ENCODE measurements at regions of chr5 and their contacts with region 1.

Region 1: DNA sequence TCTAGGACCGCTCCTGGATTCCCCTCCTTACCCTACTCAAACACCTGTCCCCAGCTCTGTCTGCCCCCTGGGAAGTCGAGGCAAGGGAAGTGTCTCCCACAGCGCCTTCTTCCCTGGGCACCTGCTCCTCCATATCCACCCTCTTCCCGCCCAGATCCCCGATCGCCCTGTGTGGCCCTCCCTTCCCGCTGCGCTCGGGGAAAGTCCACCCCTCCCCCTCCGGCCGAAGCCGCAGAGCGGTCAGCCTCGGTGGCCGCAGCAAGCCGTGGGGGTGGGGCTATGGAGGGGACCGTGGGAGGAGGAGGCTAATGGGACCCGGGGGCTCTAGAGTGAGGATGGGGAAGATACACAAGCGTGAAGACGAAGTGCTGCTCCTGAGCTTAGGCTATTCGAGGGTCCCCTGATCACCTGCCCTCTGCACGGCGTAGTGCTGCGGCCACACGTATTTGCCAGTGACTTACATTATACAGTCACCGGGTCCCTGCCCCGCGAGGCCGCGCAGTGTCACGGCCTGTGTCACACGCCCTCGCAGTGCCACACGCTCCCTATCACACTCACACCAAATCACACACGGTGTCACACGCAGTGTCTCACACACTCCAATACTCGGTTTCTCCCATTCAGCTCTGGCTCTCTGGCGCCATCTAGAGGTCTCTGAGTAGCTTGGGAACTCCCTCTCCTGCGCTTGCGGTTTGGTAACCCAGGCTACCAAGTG is 658 bp upstream of the PCDH1 start:
- DNase-seq: peak; percentile 93
- H3K4me3 Mint-ChIP-seq: peak overlapping the region; percentile 37
- H3K27ac Mint-ChIP-seq: no peak overlapping the region
- H3K4me1 Mint-ChIP-seq: peaks cover 21% of the 10 kb centered on the region
- H3K27me3 Mint-ChIP-seq: peaks cover 78% of the 10 kb centered on the region

Region 2: GRCh38 chr5:141691867-141692532 is 186.9 kb before region 1 on chr5:
- CTCF ChIA-PET with region 1: interaction called, 60 read pairs
- POLR2A ChIA-PET with region 1: no interaction called
- DNase-seq: peak; percentile 85
- H3K4me3 Mint-ChIP-seq: peak overlapping the region; percentile 55
- H3K27ac Mint-ChIP-seq: peak overlapping the region; percentile 54
- H3K4me1 Mint-ChIP-seq: peaks cover 31% of the 10 kb centered on the region
- H3K27me3 Mint-ChIP-seq: peaks cover 28% of the 10 kb centered on the region

Region 3: GRCh38 chr5:141701360-141702119 is 177.3 kb before region 1 on chr5:
- CTCF ChIA-PET with region 1: interaction called, 15 read pairs
- POLR2A ChIA-PET with region 1: no interaction called
- DNase-seq: no peak
- H3K4me3 Mint-ChIP-seq: peak overlapping the region; percentile 71
- H3K27ac Mint-ChIP-seq: no peak overlapping the region
- H3K4me1 Mint-ChIP-seq: peaks cover 23% of the 10 kb centered on the region
- H3K27me3 Mint-ChIP-seq: peaks cover 48% of the 10 kb centered on the region

Region 4: DNA sequence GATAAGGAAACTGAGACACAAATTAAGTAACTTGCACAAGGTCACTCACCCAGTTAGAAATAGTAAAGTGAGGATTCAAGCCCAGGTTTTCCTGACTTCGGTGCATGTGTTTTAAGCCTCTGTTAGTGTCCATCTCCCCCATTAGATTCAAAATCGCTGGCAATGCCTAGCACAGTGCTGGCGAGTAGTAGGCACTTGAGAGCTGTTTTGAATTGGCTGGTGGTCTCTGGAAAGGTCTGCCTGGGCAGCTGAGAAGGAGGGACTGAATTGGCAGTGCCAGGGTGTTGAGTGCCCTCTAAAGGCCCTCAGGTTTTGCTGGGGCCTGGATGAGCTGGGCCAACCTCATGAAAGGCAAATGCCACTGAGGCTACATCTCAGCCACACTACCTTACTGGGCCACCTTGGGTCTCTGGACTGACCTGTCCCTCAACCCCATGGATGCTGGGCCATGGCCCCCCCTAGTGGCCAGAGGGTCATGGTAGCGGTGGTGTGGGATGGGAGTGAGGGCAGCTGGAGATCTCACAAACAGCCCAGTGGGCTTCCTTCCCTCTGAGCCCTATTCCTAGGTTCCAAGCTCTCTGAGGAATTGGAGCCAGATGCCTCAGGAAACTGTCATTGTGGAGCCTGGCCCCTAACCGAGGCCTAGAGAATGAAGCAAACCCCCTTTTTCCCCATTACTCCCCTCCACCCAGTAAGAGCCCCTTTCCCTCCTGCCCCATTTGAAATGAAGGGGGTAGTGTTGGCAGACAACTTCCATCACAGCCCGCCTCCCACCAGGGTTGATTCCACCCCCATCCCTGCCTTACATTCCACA is 64.9 kb before region 1 on chr5:
- CTCF ChIA-PET with region 1: interaction called, 10 read pairs
- POLR2A ChIA-PET with region 1: no interaction called
- DNase-seq: peak; percentile 26
- H3K4me3 Mint-ChIP-seq: no peak overlapping the region
- H3K27ac Mint-ChIP-seq: no peak overlapping the region
- H3K4me1 Mint-ChIP-seq: no peaks in the 10 kb centered on the region
- H3K27me3 Mint-ChIP-seq: peaks cover 30% of the 10 kb centered on the region

Region 5: GRCh38 chr5:141851516-141851871 is 27.4 kb before region 1 on chr5:
- CTCF ChIA-PET with region 1: no interaction called
- POLR2A ChIA-PET with region 1: no interaction called
- DNase-seq: no peak
- H3K4me3 Mint-ChIP-seq: peak overlapping the region; percentile 44
- H3K27ac Mint-ChIP-seq: no peak overlapping the region
- H3K4me1 Mint-ChIP-seq: peaks cover 13% of the 10 kb centered on the region
- H3K27me3 Mint-ChIP-seq: peaks cover 2% of the 10 kb centered on the region

Region 6: GRCh38 chr5:141889282-141889871 is 10.5 kb after region 1 on chr5:
- CTCF ChIA-PET with region 1: interaction called, 11 read pairs
- POLR2A ChIA-PET with region 1: no interaction called
- DNase-seq: no peak
- H3K4me3 Mint-ChIP-seq: no peak overlapping the region
- H3K27ac Mint-ChIP-seq: no peak overlapping the region
- H3K4me1 Mint-ChIP-seq: no peaks in the 10 kb centered on the region
- H3K27me3 Mint-ChIP-seq: peaks cover 25% of the 10 kb centered on the region

Region 7: DNA sequence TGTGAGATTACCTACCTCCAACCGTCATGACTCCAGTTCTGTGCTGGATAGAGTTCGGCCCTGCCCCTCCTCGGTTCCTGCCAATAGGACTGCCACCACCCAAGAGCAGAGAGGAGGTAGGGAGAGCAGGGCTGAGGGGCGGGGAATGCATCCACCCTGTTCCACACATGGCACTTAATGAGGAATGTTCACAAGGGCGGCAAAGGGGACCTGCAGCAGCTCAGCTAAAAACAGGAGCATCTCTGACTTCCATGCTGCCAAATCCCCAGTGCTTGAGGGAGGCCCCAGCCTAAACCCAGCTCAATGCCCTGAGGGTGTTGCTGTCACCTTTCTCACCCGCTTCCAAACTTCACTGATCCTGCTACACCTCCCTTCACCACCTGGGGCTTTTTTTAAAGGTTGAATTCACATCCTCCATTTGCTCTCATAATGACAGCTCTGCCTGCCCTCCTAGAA is 37.0 kb after region 1 on chr5:
- CTCF ChIA-PET with region 1: interaction called, 10 read pairs
- POLR2A ChIA-PET with region 1: no interaction called
- DNase-seq: no peak
- H3K4me3 Mint-ChIP-seq: no peak overlapping the region
- H3K27ac Mint-ChIP-seq: no peak overlapping the region
- H3K4me1 Mint-ChIP-seq: peaks cover 7% of the 10 kb centered on the region
- H3K27me3 Mint-ChIP-seq: peaks cover 38% of the 10 kb centered on the region

Region 8: GRCh38 chr5:142167458-142167857 is 288.6 kb after region 1 on chr5:
- CTCF ChIA-PET with region 1: no interaction called
- POLR2A ChIA-PET with region 1: no interaction called
- DNase-seq: no peak
- H3K4me3 Mint-ChIP-seq: no peak overlapping the region
- H3K27ac Mint-ChIP-seq: no peak overlapping the region
- H3K4me1 Mint-ChIP-seq: no peaks in the 10 kb centered on the region
- H3K27me3 Mint-ChIP-seq: no peaks in the 10 kb centered on the region

Measured in activated CD4-positive, alpha-beta T cell treated with anti-CD3 and anti-CD28 coated beads, Interleukin-2, amount 10 ng/mL, durations not matched to agents 7 days and 5 days (primary cell).